ENCODE measurements at regions of chr6 and their contacts with region 1.

Region 1: DNA sequence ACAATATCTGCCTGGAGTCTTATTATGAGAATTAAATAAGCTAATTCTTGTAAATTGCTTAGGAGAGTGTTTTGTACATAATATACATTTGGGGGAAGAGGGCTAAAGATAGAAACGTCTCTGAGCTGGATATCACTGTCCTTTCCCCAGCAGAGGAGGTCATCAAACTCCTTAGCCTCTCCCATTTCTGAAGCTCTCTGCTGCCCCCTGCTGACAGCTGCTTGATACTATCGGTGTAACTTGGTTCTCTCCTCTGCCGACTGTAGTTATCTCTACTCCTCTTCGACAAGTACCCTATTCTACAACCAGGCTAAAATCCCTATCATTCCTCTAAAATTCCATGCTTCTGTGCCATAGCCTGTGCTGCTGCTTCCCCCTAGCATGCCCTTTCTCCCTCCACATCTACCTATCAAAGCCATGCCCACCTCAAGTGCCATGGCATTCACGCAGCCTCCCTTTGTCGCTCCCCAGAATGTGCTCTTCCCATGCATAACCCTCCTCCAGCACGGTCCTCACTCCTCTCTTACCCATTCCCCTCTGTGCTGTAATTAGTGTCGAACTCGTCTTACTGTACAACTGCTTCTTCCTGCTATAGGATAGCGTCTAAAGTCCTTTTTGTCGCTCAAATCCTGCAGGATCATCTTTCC is 101.2 kb downstream of the EPM2A start:
- DNase-seq: peak; percentile 91
- H3K4me3 Mint-ChIP-seq: no peak overlapping the region
- H3K27ac Mint-ChIP-seq: no peak overlapping the region
- H3K4me1 Mint-ChIP-seq: peaks cover 5% of the 10 kb centered on the region
- H3K27me3 Mint-ChIP-seq: no peaks in the 10 kb centered on the region

Region 2: DNA sequence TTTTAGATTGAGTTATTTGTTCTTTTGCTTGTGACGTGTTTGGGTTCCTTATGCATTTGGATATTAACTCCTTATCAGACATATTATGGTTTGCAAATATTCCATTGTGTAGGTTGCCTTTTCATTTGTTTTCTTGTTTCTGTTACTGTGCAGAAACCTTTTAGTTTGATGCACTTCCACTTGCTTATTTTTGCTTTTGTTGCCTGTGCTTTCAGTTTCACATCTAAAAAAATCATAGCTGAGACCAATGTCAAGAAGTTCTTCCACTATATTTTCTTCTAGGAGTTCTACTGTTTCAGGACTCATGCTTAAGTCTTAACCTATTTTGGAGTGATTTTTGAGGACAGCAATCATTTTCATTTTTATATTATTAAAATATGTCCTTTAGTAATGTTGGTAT is 12.3 kb before region 1 on chr6:
- CTCF ChIA-PET with region 1: interaction called, 14 read pairs
- intact Hi-C with region 1: no loop called
- DNase-seq: no peak
- H3K4me3 Mint-ChIP-seq: no peak overlapping the region
- H3K27ac Mint-ChIP-seq: no peak overlapping the region
- H3K4me1 Mint-ChIP-seq: no peaks in the 10 kb centered on the region
- H3K27me3 Mint-ChIP-seq: no peaks in the 10 kb centered on the region

Measured in activated naive CD4-positive, alpha-beta T cell treated with anti-CD3 and anti-CD28 coated beads for 36 hours (primary cell).